ENCODE measurements at regions of chr7 and their contacts with region 1.

Region 1: GRCh38 chr7:64665980-64666662 is at the start of gene ZNF107:
- DNase-seq: peak; percentile 98
- H3K4me3 ChIP-seq: peak within 1 kb of the TSS; percentile 57 to 79 (median 76)
- H3K27ac ChIP-seq: peak within 1 kb of the TSS; percentile 67 to 81 (median 72)
- H3K4me1 ChIP-seq: peaks cover 0 to 12% (median 6%) of the 10 kb centered on the region in 4 donors
- H3K27me3 ChIP-seq: no peaks in the 10 kb centered on the region
- CTCF ChIP-seq: no peak
- EP300 ChIP-seq: no peak
- POLR2A ChIP-seq: no peak
- total RNA-seq, gene ZNF107: 3.0 to 8.3 (median 4.5) TPM

Region 2: DNA sequence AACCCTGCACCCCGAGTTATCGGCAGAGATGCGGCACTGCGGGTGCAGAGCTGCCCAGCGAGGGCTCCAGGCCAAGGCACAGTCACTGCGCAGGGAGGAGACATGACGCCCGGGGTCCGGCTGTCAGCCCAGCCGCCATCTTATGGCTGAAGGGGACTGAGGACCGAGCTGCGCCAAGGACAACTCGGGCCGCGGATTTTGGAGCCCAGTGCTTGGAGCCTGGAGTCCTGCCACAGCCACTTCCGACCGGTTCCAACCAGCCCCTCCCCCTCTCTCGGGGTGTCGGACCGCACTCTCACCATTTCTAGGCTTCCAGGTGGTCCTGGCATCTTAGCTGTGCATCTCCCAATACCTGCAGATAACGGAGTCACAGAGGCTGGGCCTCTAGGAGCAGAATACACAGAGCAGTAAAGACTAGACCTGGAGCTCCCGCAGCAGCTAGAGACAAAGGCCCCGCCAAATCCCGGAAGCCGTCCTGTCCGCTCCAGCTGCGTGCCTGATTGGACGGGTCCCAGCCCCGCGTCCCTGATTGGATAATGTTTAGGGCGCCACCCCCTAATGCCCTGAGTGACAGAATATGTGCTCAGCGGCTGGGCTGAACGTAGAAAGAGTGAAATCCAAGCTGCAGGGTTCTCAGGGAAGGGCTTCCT is 103.4 kb before region 1 on chr7 and contains the start of gene ZNF680:
- intact Hi-C with region 1: loop called (anchors 5 kb)
- DNase-seq: peak; percentile 98
- H3K4me3 ChIP-seq: peak within 1 kb of the TSS; percentile 71 to 76 (median 72)
- H3K27ac ChIP-seq: peak within 1 kb of the TSS; percentile 74 to 92 (median 86)
- H3K4me1 ChIP-seq: peaks cover 0 to 36% (median 29%) of the 10 kb centered on the region in 4 donors
- H3K27me3 ChIP-seq: no peaks in the 10 kb centered on the region
- CTCF ChIP-seq: no peak
- EP300 ChIP-seq: peak in 1 of 4 donors; percentile 24
- POLR2A ChIP-seq: peak; percentile 41 to 59
- total RNA-seq, gene ZNF680: 9.8 to 28.0 (median 16.7) TPM

Region 3: GRCh38 chr7:64902806-64903721 is 236.9 kb after region 1 on chr7 and contains the start of gene ZNF273:
- intact Hi-C with region 1: loop called (anchors 10 kb)
- DNase-seq: peak; percentile 97
- H3K4me3 ChIP-seq: peak within 1 kb of the TSS; percentile 61 to 76 (median 70)
- H3K27ac ChIP-seq: peak within 1 kb of the TSS; percentile 72 to 82 (median 79)
- H3K4me1 ChIP-seq: peaks cover 0 to 15% (median 11%) of the 10 kb centered on the region in 4 donors
- H3K27me3 ChIP-seq: no peaks in the 10 kb centered on the region
- CTCF ChIP-seq: no peak
- EP300 ChIP-seq: no peak
- POLR2A ChIP-seq: peak in 1 of 2 donors; percentile 38
- total RNA-seq, gene ZNF273: 7.5 to 38.2 (median 9.6) TPM